ENCODE measurements at regions of chr3 and their contacts with region 1.

Region 1: DNA sequence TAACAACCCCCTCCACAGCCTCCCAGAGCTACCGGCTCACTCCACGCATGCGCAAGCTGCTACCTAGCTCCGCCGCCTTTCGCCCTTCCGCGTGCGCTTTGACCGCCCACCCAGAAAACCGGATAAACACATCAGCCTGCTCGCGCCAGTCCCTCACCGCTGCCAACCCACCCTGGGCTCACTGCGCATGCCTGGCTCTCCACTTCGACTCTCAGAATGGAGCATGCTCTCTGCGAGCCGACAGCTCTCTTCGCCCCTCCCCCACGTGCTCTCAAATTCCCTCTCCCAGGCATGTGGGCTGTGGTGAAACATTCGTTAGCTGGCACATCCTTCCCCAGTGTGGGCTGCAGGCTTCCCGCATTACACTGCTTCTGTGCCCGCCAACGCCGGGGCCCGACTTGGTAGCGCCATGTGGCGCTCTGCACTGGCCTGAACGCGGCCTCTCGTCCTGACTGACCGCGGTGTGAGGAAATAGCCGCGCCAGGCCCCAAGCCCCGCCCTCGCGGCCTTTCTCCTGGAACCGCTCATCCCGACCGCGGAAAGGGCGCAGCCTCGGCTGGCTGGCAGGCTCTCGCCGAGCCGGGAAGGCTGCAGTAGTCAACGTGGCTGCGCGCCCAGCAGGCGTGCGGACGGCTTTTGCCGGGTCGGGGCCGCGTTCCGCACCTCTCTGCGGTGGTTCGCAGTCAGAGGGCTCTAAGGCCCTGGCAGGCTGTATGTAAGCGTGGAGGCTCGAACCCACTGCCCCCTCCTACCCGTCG is 445 bp upstream of the MSL2 start:
- DNase-seq: peak; percentile 99 to 100 (median 99)
- H3K4me3 ChIP-seq: peak overlapping the region; percentile 92
- H3K27ac ChIP-seq: peak overlapping the region; percentile 99 to 100
- H3K4me1 ChIP-seq: peaks cover 1% of the 10 kb centered on the region
- H3K27me3 ChIP-seq: no peaks in the 10 kb centered on the region
- CTCF ChIP-seq: no peak
- EP300 ChIP-seq: no peak
- POLR2A ChIP-seq: peak; percentile 30

Region 2: DNA sequence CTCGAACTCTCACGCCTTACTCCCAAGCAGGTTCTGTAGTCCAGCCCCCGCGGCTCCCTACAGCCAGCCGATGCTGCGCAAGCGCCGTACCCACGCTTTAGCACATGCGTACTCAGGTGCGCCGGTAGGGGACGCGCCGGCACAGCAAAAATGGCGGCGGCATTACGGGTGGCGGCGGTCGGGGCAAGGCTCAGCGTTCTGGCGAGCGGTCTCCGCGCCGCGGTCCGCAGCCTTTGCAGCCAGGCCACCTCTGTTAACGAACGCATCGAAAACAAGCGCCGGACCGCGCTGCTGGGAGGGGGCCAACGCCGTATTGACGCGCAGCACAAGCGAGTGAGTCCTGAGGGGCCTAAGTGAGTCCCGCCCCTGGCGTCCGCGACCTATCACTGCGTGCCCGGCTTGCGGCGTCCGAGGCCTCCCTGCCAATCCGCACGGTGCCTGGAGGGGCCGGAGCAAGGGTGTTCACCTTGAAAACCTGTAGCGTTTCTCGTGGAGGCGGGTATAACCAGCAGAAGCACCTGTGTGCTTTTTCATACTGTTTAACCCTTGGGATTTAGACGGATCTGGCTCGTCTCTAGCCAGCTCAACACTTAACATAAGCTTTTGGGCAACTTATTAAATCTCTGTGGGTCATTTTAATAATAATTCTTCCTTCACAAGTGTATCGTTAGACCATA is 53.8 kb after region 1 on chr3 and contains the start of gene PCCB:
- intact Hi-C with region 1: loop called in 1 of 4 experiments (anchors 5 kb)
- DNase-seq: peak; percentile 92 to 96 (median 93)
- H3K4me3 ChIP-seq: peak within 1 kb of the TSS; percentile 72
- H3K27ac ChIP-seq: peak within 1 kb of the TSS; percentile 4 to 79
- H3K4me1 ChIP-seq: peaks cover 1% of the 10 kb centered on the region
- H3K27me3 ChIP-seq: no peaks in the 10 kb centered on the region
- CTCF ChIP-seq: peak; percentile 95 to 99 (median 96)
- EP300 ChIP-seq: no peak
- POLR2A ChIP-seq: peak; percentile 63
- total RNA-seq, gene PCCB: 8.2 to 26.5 (median 22.1) TPM

Measured in ovary (tissue), 10 donors.